ENCODE measurements at regions of chr3 and their contacts with region 1.

Region 1: GRCh38 chr3:58577269-58577821 is at the start of gene FAM107A:
- DNase-seq: peak in 1 of 2 experiments; percentile 59
- H3K4me3 ChIP-seq: no peak within 1 kb of the TSS
- H3K27ac ChIP-seq: no peak within 1 kb of the TSS
- H3K4me1 ChIP-seq: peaks cover 1 to 8% (median 7%) of the 10 kb centered on the region in 4 experiments; a peak in 5 of 7 replicates
- H3K27me3 ChIP-seq: no peaks in the 10 kb centered on the region
- CTCF ChIP-seq: peak; percentile 25 to 50 (median 38); a peak in 3 of 4 replicates
- EP300 ChIP-seq: no peak
- POLR2A ChIP-seq: no peak
- RAD21 ChIP-seq: peak; percentile 6 to 31; a peak in 1 of 4 replicates
- total RNA-seq, gene FAM107A: 0.57 and 0.65 TPM in 2 replicates

Region 2: GRCh38 chr3:58285334-58285733 is 292.0 kb before region 1 on chr3:
- CTCF ChIA-PET with region 1: no interaction called
- POLR2A ChIA-PET with region 1: no interaction called
- DNase-seq: no peak
- H3K4me3 ChIP-seq: no peak overlapping the region
- H3K27ac ChIP-seq: no peak overlapping the region
- H3K4me1 ChIP-seq: no peaks in the 10 kb centered on the region; a peak in 1 of 7 replicates
- H3K27me3 ChIP-seq: no peaks in the 10 kb centered on the region
- CTCF ChIP-seq: no peak
- EP300 ChIP-seq: no peak
- POLR2A ChIP-seq: no peak
- RAD21 ChIP-seq: no peak

Region 3: DNA sequence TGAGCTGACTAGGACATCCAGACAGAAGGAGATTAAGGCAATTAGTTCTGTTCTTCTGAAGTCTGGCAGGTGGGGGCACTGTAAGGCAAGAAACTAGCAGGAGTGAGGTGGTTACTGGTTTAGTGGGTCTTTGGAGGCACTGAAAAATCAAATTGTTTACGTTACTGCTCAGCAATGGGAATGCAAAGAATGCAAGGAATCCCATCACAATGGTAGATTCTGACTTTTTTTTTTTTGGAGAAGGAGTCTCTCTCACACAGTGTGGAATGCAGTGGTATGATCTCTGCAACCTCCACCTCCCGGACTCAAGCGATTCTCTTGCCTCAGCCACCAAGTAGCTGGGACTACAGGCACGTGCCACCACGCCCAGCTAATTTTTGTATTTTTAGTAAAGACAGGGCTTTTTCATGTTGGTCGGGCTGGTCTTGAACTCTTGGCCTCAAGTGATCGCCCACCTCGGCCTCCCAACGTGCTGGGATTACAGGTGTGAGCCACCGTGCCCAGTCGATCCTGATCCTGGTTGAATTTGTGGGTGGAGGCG is 16.5 kb before region 1 on chr3:
- CTCF ChIA-PET with region 1: interaction called, 201 read pairs
- POLR2A ChIA-PET with region 1: interaction called, 7 read pairs
- DNase-seq: peak in 1 of 2 experiments; percentile 78
- H3K4me3 ChIP-seq: no peak overlapping the region
- H3K27ac ChIP-seq: peak overlapping the region; percentile 53
- H3K4me1 ChIP-seq: peaks cover 7 to 16% (median 11%) of the 10 kb centered on the region in 4 experiments
- H3K27me3 ChIP-seq: no peaks in the 10 kb centered on the region
- CTCF ChIP-seq: peak in 2 of 3 experiments; percentile 76 to 84; a peak in 3 of 4 replicates
- EP300 ChIP-seq: peak in 1 of 2 experiments; percentile 98; a peak in 2 of 3 replicates
- POLR2A ChIP-seq: no peak
- RAD21 ChIP-seq: peak; percentile 94 to 95